Activated CD4-positive, alpha-beta memory T cell treated with anti-CD3 and anti-CD28 coated beads for 36 hours (primary cell): ENCODE measurements at regions of chr4 and their contacts with region 1.

Region 1: DNA sequence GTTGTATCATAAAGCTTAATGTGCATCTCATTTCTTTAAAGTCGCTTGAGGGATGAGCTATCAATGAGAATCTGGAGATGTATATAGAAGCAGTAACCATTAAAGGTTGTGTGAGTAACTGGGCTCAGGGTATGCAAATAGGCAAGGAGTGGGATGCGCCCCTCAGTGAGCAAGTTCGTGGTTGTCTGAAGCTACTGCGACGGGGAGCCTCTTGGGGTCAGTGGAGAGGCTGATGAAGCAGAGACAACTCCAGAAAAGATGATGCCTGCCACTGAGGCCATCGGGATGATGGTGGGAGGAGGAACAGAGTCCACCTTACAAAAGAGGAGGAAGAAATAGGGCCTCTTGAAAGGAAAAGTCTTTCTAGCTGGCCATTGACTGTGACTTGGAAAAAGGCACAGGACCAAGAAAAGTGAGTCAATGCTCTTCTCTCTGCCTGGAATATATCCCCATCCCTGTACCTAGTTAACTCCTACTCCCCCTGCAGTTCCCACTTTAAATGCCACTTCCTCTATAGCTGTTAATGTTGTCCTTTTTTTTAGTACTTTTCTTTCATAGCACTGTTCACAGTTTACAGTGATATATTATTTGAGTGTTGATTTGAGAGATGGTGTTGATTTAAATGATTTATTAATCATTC is 51.4 kb upstream of the LSM6 start:
- DNase-seq: peak; percentile 37
- H3K4me3 Mint-ChIP-seq: no peak overlapping the region
- H3K27ac Mint-ChIP-seq: no peak overlapping the region
- H3K4me1 Mint-ChIP-seq: peaks cover 5% of the 10 kb centered on the region
- H3K27me3 Mint-ChIP-seq: peaks cover 6% of the 10 kb centered on the region

Region 2: DNA sequence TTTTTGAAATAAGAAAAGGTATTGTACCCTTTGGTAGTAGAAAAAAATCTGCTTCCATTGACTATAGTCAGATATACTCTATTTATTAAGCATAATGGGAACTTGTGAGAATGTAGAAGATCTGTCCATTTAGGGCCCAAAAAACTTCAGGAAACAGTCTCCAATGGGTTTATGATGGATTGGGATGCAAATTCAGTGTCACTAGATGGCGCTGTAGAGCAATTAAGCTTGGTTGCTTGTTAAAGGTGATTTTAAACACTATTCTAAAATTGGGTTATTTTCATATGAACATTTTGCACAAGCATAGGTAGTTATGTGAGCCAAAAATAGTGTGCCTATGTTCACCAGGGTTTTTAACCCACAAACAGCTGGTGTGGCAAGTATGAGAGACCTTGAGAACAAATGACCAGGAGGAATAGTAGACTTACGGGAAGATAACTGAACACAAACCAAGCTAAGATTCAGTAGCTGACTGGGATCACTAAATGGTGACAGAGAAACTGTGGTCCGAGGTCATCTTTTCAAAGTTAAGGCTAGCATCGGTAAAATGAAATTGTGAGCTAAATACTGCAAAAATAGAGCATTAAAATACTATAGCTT is 29.0 kb before region 1 on chr4:
- CTCF ChIA-PET with region 1: interaction called, 11 read pairs
- POLR2A ChIA-PET with region 1: no interaction called
- intact Hi-C with region 1: no loop called
- DNase-seq: peak; percentile 12
- H3K4me3 Mint-ChIP-seq: no peak overlapping the region
- H3K27ac Mint-ChIP-seq: no peak overlapping the region
- H3K4me1 Mint-ChIP-seq: no peaks in the 10 kb centered on the region
- H3K27me3 Mint-ChIP-seq: peaks cover 7% of the 10 kb centered on the region

Region 3: DNA sequence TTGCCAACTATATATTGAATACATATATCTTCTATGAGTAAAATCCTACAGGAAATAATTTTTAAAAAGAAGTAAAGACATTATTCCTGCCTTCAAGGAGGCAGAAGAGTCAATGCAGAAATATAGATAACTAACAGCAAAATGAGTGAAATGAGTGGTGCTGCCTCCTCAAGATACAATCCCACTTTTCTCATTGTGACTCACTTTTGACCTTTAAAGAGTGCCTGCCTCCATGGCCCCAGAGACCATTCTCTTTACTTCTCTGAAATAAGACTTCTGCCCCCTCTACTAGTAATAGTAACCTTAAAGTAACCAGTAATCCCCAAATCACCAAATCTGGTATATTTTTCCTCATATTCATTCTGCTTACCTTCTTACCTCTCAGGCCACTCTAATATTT is 382.1 kb after region 1 on chr4:
- CTCF ChIA-PET with region 1: no interaction called
- POLR2A ChIA-PET with region 1: no interaction called
- intact Hi-C with region 1: no loop called
- DNase-seq: no peak
- H3K4me3 Mint-ChIP-seq: no peak overlapping the region
- H3K27ac Mint-ChIP-seq: no peak overlapping the region
- H3K4me1 Mint-ChIP-seq: peaks cover 8% of the 10 kb centered on the region
- H3K27me3 Mint-ChIP-seq: no peaks in the 10 kb centered on the region